ENCODE measurements at regions of chr6 and their contacts with region 1.

Region 1: GRCh38 chr6:149431905-149432775 is 32.1 kb downstream of the SUMO4 start:
- DNase-seq: peak; percentile 92
- H3K4me3 ChIP-seq: peak overlapping the region; percentile 7 to 50; a peak in 2 of 4 replicates
- H3K27ac ChIP-seq: no peak overlapping the region
- H3K4me1 ChIP-seq: peaks cover 0 to 2% of the 10 kb centered on the region in 2 experiments; a peak in 1 of 4 replicates
- H3K27me3 ChIP-seq: no peaks in the 10 kb centered on the region
- CTCF ChIP-seq: peak; percentile 85
- EP300 ChIP-seq: no peak
- RAD21 ChIP-seq: peak; percentile 99

Region 2: DNA sequence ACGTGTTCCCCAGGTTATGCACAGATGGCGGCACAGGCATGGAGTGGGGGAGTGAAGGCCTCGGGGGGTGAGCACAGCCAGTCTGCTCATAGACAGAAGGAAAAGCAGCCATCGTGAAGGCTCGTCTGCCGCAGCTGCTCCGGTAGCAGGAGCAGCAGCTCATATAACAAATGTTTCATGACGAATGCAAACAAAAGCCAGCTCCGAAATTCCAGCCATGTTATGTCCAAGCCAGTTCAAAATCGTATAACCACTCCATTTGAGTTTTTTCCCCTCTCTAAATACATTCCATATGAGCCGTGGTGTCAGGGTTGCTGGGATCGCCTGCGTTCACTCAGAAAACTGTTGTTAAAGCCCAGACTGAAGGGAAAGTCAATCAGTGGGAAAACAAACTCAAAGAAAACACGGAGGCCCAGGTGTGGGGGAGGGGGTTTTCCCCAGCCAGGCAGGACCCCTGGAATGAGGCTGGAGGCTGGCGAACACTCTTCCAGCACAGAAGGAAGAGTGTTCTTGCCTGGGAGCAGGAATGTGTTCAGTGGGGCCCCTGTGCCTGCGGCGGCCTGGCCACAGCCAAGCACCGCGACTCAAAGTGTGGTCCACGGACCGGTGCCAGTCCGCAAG is 395.0 kb before region 1 on chr6:
- CTCF ChIA-PET with region 1: interaction called, 104 read pairs
- POLR2A ChIA-PET with region 1: no interaction called
- DNase-seq: no peak
- H3K4me3 ChIP-seq: no peak overlapping the region
- H3K27ac ChIP-seq: no peak overlapping the region
- H3K4me1 ChIP-seq: peaks cover 8 to 12% of the 10 kb centered on the region in 2 experiments
- H3K27me3 ChIP-seq: no peaks in the 10 kb centered on the region
- CTCF ChIP-seq: no peak
- EP300 ChIP-seq: no peak
- RAD21 ChIP-seq: no peak

Region 3: GRCh38 chr6:149060300-149060997 is 371.7 kb before region 1 on chr6:
- CTCF ChIA-PET with region 1: interaction called, 46 read pairs
- POLR2A ChIA-PET with region 1: no interaction called
- DNase-seq: peak; percentile 59
- H3K4me3 ChIP-seq: no peak overlapping the region; a peak in 1 of 4 replicates
- H3K27ac ChIP-seq: peak overlapping the region; percentile 47 to 57; a peak in 3 of 4 replicates
- H3K4me1 ChIP-seq: peaks cover 8 to 21% of the 10 kb centered on the region in 2 experiments; a peak in 2 of 4 replicates
- H3K27me3 ChIP-seq: no peaks in the 10 kb centered on the region
- CTCF ChIP-seq: no peak
- EP300 ChIP-seq: peak in 1 of 2 experiments; percentile 17; a peak in 1 of 4 replicates
- RAD21 ChIP-seq: no peak

Region 4: DNA sequence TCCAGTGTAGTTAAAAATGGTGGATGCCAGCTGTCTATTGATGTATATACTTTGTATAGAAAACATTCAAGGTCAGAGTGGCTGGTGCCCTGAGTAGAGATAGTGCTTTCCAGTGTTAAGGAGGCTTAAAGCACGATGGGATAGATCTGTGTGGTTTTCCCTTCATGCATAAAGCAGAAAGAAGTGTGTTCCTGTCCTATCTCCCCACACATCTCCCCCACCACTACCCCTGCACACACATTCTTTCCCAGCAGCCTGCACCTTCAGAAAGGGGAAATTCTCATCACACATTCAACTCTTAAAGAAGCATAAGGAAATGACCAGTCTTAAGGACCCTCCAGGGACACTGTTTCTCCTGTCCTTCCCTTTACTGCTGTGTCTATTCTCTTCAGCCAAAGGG is 336.3 kb before region 1 on chr6:
- CTCF ChIA-PET with region 1: interaction called, 16 read pairs
- POLR2A ChIA-PET with region 1: no interaction called
- DNase-seq: no peak
- H3K4me3 ChIP-seq: no peak overlapping the region
- H3K27ac ChIP-seq: no peak overlapping the region; a peak in 1 of 4 replicates
- H3K4me1 ChIP-seq: peaks cover 6 to 13% of the 10 kb centered on the region in 2 experiments; a peak in 3 of 4 replicates
- H3K27me3 ChIP-seq: no peaks in the 10 kb centered on the region
- CTCF ChIP-seq: no peak
- EP300 ChIP-seq: no peak
- RAD21 ChIP-seq: no peak

Region 5: GRCh38 chr6:149414009-149414408 is 18.1 kb before region 1 on chr6:
- CTCF ChIA-PET with region 1: interaction called, 41 read pairs
- POLR2A ChIA-PET with region 1: interaction called, 3 read pairs
- DNase-seq: no peak
- H3K4me3 ChIP-seq: no peak overlapping the region
- H3K27ac ChIP-seq: no peak overlapping the region
- H3K4me1 ChIP-seq: no peaks in the 10 kb centered on the region
- H3K27me3 ChIP-seq: no peaks in the 10 kb centered on the region
- CTCF ChIP-seq: no peak
- EP300 ChIP-seq: no peak
- RAD21 ChIP-seq: no peak

Region 6: GRCh38 chr6:149642829-149643580 is 210.9 kb after region 1 on chr6:
- CTCF ChIA-PET with region 1: no interaction called
- POLR2A ChIA-PET with region 1: no interaction called
- DNase-seq: no peak
- H3K4me3 ChIP-seq: no peak overlapping the region
- H3K27ac ChIP-seq: no peak overlapping the region
- H3K4me1 ChIP-seq: no peaks in the 10 kb centered on the region; a peak in 1 of 4 replicates
- H3K27me3 ChIP-seq: no peaks in the 10 kb centered on the region
- CTCF ChIP-seq: no peak
- EP300 ChIP-seq: no peak
- RAD21 ChIP-seq: no peak

Region 7: DNA sequence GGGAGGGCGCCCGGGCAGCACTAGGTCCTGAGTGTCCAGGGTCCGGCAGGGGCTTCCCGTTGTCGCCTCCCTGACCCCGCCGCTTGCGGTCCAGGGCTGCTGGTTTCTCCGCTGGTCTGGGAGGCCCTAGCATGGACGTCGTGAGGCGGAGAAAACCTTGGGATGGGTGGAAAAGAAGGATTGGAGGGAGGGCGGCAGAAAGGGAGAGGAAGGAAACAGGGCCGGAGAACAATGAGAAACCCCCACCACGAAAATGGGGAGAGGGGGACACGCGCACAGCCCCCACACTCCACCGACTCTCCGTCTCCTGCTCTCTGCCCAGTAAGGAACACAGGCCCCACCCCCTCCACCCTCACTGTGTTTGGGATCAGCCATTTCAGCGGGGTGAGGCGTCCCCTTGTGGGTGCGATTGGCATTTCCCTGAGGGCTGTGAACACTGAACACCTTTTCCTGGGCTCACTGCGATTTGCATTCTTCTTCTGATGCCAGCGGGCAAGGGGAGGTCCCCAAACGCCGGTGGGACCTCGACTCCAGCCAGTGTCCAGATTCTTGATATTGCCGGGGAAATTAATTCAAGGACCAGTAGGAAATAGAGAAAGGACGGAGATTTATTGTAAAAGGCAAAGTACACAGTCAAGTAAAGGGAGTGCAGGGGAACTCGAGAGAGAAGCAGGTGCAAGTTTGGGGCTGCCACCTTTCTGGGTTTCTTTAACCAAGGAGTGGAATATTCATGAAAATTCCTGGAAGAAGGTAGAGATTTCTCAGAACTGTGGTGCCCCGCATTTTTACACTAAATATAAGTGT is 494.0 kb after region 1 on chr6:
- CTCF ChIA-PET with region 1: no interaction called
- POLR2A ChIA-PET with region 1: no interaction called
- DNase-seq: peak; percentile 80
- H3K4me3 ChIP-seq: peak overlapping the region; percentile 32 to 40
- H3K27ac ChIP-seq: no peak overlapping the region
- H3K4me1 ChIP-seq: peaks cover 0 to 9% of the 10 kb centered on the region in 2 experiments; a peak in 1 of 4 replicates
- H3K27me3 ChIP-seq: no peaks in the 10 kb centered on the region; the same call in 1 of the 2 replicates
- CTCF ChIP-seq: peak; percentile 73
- EP300 ChIP-seq: no peak
- RAD21 ChIP-seq: peak; percentile 86

Measured in SK-N-SH (cell line).